Mammary epithelial cell (primary cell): ENCODE measurements at regions of chr2 and their contacts with region 1.

Region 1: GRCh38 chr2:68121873-68122679 is 35.6 kb upstream of the PNO1 start:
- DNase-seq: peak; percentile 45
- H3K4me3 ChIP-seq: no peak overlapping the region
- H3K27ac ChIP-seq: no peak overlapping the region
- H3K4me1 ChIP-seq: no peaks in the 10 kb centered on the region
- H3K27me3 ChIP-seq: no peaks in the 10 kb centered on the region
- CTCF ChIP-seq: peak; percentile 92 to 98

Region 2: DNA sequence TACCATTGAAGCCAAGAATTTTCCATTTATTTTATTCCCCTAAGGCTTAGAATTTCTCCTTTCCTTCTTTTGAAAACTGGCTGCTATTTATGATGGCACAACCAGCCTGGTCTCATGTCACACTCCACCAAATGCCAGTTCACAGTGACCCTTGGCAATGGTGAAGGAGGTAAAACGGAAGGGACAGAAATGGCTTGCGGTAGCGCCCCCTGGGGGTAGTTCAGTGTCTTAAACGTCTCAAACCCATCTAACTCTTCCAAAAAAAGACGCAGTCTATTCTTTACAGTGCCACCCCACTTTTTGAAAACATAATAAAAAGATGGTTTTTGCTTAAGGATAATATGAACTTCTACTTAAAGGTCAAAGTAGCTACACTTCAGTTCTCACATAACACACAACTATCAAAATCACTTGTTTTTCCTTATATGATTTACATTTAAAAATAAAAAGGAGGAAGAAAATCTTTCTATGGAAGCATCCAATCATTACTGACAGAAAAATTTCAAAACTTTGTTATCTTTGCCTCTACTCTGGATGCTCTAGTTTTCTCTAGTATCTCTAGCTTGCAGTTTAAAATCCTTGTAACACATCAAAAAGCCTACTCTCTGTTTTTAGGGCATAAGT is 63.6 kb after region 1 on chr2:
- CTCF ChIA-PET with region 1: no interaction called
- dilution Hi-C with region 1: no loop called
- in situ Hi-C with region 1: no loop called
- intact Hi-C with region 1: loop called (anchors 2 kb)
- DNase-seq: peak; percentile 11
- H3K4me3 ChIP-seq: no peak overlapping the region
- H3K27ac ChIP-seq: no peak overlapping the region
- H3K4me1 ChIP-seq: peaks cover 3% of the 10 kb centered on the region
- H3K27me3 ChIP-seq: no peaks in the 10 kb centered on the region
- CTCF ChIP-seq: peak; percentile 38 to 60

Region 3: GRCh38 chr2:68244456-68244855 is 122.4 kb after region 1 on chr2:
- CTCF ChIA-PET with region 1: interaction called, 11 read pairs
- dilution Hi-C with region 1: no loop called
- in situ Hi-C with region 1: no loop called
- intact Hi-C with region 1: loop called (anchors 1 kb)
- DNase-seq: no peak
- H3K4me3 ChIP-seq: no peak overlapping the region
- H3K27ac ChIP-seq: no peak overlapping the region
- H3K4me1 ChIP-seq: peaks cover 10% of the 10 kb centered on the region
- H3K27me3 ChIP-seq: no peaks in the 10 kb centered on the region
- CTCF ChIP-seq: no peak

Region 4: DNA sequence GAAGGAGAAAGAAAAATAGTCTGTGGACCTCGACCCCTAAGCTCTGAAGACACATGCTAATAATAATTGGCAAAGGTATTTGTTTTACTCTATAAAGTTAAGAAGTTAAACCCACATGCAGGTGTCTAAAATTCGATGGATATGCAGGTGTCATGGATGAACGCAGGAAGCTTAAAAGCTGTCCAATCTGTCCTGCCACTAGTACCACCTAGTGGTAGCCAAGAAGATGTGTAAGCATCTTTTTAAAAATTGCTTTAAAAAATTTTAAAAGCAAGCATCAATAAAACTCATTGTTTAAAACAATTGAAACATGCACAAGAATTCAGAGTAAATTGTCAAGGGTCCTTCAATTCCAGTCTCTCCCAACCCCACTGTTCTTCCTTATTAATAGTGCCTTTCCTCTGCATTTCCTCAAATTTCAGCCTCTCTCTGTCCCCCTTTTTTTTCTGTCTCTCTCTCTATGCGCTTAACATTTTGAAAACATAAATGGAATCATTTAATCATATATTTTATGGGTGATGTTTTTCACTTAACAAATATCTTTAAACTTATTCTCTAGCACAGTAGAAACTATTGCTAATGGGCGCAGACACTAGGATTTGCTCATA is 160.8 kb after region 1 on chr2:
- CTCF ChIA-PET with region 1: interaction called, 6 read pairs
- dilution Hi-C with region 1: loop called (anchors 5 kb)
- in situ Hi-C with region 1: no loop called
- intact Hi-C with region 1: loop called (anchors 1 kb)
- DNase-seq: peak; percentile 31
- H3K4me3 ChIP-seq: no peak overlapping the region
- H3K27ac ChIP-seq: no peak overlapping the region
- H3K4me1 ChIP-seq: peaks cover 4% of the 10 kb centered on the region
- H3K27me3 ChIP-seq: peaks cover 8% of the 10 kb centered on the region
- CTCF ChIP-seq: peak; percentile 73 to 77

Region 5: GRCh38 chr2:68290901-68291300 is 168.8 kb after region 1 on chr2:
- CTCF ChIA-PET with region 1: no interaction called
- dilution Hi-C with region 1: loop called (anchors 5 kb)
- in situ Hi-C with region 1: loop called (anchors 5 kb)
- intact Hi-C with region 1: loop called (anchors 1 kb)
- DNase-seq: no peak
- H3K4me3 ChIP-seq: no peak overlapping the region
- H3K27ac ChIP-seq: no peak overlapping the region
- H3K4me1 ChIP-seq: no peaks in the 10 kb centered on the region
- H3K27me3 ChIP-seq: peaks cover 2% of the 10 kb centered on the region
- CTCF ChIP-seq: no peak

Region 6: DNA sequence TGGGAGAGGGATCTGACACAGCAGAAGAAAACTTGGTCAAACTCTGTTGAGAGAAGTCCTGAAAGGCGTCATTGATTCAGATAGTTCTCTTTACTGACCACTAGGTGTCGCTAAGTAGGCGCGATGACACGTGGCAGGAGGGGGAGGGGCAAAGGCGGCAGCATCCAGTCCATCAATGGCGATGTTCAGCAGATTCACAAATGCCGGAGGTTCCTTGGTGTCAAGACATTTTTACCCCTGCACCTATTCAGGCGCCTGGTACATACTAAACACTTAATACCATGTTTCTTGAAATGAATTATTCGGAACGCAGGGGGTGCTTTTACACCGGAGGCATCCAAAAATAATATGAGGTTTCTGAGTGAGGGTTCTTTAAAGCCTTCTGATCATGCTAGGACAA is 240.0 kb after region 1 on chr2:
- CTCF ChIA-PET with region 1: no interaction called
- dilution Hi-C with region 1: no loop called
- in situ Hi-C with region 1: no loop called
- intact Hi-C with region 1: loop called (anchors 1 kb)
- DNase-seq: peak; percentile 47
- H3K4me3 ChIP-seq: no peak overlapping the region
- H3K27ac ChIP-seq: no peak overlapping the region
- H3K4me1 ChIP-seq: no peaks in the 10 kb centered on the region
- H3K27me3 ChIP-seq: no peaks in the 10 kb centered on the region
- CTCF ChIP-seq: peak; percentile 84 to 85

Region 7: GRCh38 chr2:68441179-68441993 is 319.3 kb after region 1 on chr2:
- CTCF ChIA-PET with region 1: no interaction called
- dilution Hi-C with region 1: no loop called
- in situ Hi-C with region 1: loop called (anchors 10 to 25 kb)
- intact Hi-C with region 1: loop called (anchors 1 kb)
- DNase-seq: peak; percentile 57
- H3K4me3 ChIP-seq: no peak overlapping the region
- H3K27ac ChIP-seq: no peak overlapping the region
- H3K4me1 ChIP-seq: no peaks in the 10 kb centered on the region
- H3K27me3 ChIP-seq: no peaks in the 10 kb centered on the region
- CTCF ChIP-seq: peak; percentile 77 to 87